Panc1 (cell line): ENCODE measurements at regions of chr11 and their contacts with region 1.

Region 1: GRCh38 chr11:66958232-66958955 is at the start of gene PC:
- DNase-seq: peak; percentile 99
- ATAC-seq: peak; percentile 97
- H3K4me3 ChIP-seq: peak within 1 kb of the TSS; percentile 59 to 74
- H3K27ac ChIP-seq: peak within 1 kb of the TSS; percentile 71
- H3K4me1 ChIP-seq: peaks cover 11% of the 10 kb centered on the region
- H3K27me3 ChIP-seq: no peaks in the 10 kb centered on the region
- CTCF ChIP-seq: no peak
- total RNA-seq, gene PC: 12.8 TPM

Region 2: GRCh38 chr11:66051766-66052663 is 906.4 kb before region 1 on chr11 and contains the start of gene SF3B2:
- CTCF ChIA-PET with region 1: interaction called, 10 read pairs
- POLR2A ChIA-PET with region 1: no interaction called
- in situ Hi-C with region 1: no loop called
- intact Hi-C with region 1: no loop called
- DNase-seq: peak; percentile 93
- ATAC-seq: peak; percentile 99
- H3K4me3 ChIP-seq: peak within 1 kb of the TSS; percentile 99
- H3K27ac ChIP-seq: peak within 1 kb of the TSS; percentile 98
- H3K4me1 ChIP-seq: peaks cover 18% of the 10 kb centered on the region
- H3K27me3 ChIP-seq: no peaks in the 10 kb centered on the region
- CTCF ChIP-seq: no peak
- total RNA-seq, gene SF3B2: 271 TPM

Region 3: DNA sequence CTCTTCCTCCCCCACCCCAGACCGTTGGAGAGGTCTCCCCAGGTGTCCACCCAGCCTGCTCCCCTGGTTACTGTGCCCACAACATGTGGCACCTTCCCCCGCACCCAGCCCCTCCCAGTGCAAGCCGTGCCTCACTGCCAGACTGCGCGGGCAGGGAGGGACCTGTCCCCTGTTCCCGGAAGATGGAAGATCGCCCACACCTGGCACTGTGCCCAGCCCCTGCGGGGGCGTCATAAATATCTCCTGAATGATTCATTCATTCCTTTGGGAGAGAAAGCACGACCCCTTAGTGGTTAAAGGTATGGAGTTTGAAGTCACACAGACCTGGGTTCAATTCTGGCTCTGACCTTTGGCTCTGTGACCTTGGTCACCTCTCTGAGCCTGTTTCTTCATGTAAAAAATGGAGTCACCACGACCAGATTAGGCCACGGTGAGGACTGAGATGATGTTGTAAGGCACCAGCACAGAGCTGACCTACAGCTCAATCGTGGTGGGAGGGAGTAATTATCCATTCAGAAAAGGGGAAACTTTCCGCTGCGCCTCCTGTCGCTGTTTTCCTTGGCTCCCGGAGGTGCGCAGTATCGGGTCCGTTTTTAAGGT is 64.0 kb after region 1 on chr11:
- CTCF ChIA-PET with region 1: no interaction called
- POLR2A ChIA-PET with region 1: no interaction called
- in situ Hi-C with region 1: no loop called
- intact Hi-C with region 1: loop called (anchors 5 kb)
- DNase-seq: no peak
- ATAC-seq: no peak
- H3K4me3 ChIP-seq: peak overlapping the region; percentile 40 to 41; a peak in 3 of 4 replicates
- H3K27ac ChIP-seq: no peak overlapping the region
- H3K4me1 ChIP-seq: peaks cover 12% of the 10 kb centered on the region
- H3K27me3 ChIP-seq: 0 out of 2 replicates have a peak, but pooled peaks cover 4% of the 10 kb centered on the region
- CTCF ChIP-seq: no peak

Region 4: GRCh38 chr11:67045341-67045764 is 87.0 kb after region 1 on chr11:
- CTCF ChIA-PET with region 1: no interaction called
- POLR2A ChIA-PET with region 1: no interaction called
- in situ Hi-C with region 1: no loop called
- intact Hi-C with region 1: no loop called
- DNase-seq: no peak
- ATAC-seq: peak; percentile 80
- H3K4me3 ChIP-seq: no peak overlapping the region
- H3K27ac ChIP-seq: no peak overlapping the region
- H3K4me1 ChIP-seq: no peaks in the 10 kb centered on the region; the same call in 1 of the 2 replicates
- H3K27me3 ChIP-seq: no peaks in the 10 kb centered on the region
- CTCF ChIP-seq: no peak

Region 5: GRCh38 chr11:67504950-67505581 is 546.7 kb after region 1 on chr11 and contains the start of gene PITPNM1:
- CTCF ChIA-PET with region 1: no interaction called
- POLR2A ChIA-PET with region 1: no interaction called
- in situ Hi-C with region 1: no loop called
- intact Hi-C with region 1: no loop called
- DNase-seq: no peak
- ATAC-seq: peak; percentile 36
- H3K4me3 ChIP-seq: peak within 1 kb of the TSS; percentile 82 to 90
- H3K27ac ChIP-seq: peak within 1 kb of the TSS; percentile 88
- H3K4me1 ChIP-seq: peaks cover 25% of the 10 kb centered on the region
- H3K27me3 ChIP-seq: no peaks in the 10 kb centered on the region
- CTCF ChIP-seq: no peak
- total RNA-seq, gene PITPNM1: 70.4 TPM